Panc1 (cell line): ENCODE measurements at regions of chr14 and their contacts with region 1.

Region 1: GRCh38 chr14:23903442-23903841 is 50.1 kb upstream of the DHRS4 start:
- DNase-seq: no peak
- ATAC-seq: no peak
- H3K4me3 ChIP-seq: no peak overlapping the region
- H3K27ac ChIP-seq: no peak overlapping the region
- H3K4me1 ChIP-seq: no peaks in the 10 kb centered on the region
- H3K27me3 ChIP-seq: no peaks in the 10 kb centered on the region
- CTCF ChIP-seq: no peak

Region 2: DNA sequence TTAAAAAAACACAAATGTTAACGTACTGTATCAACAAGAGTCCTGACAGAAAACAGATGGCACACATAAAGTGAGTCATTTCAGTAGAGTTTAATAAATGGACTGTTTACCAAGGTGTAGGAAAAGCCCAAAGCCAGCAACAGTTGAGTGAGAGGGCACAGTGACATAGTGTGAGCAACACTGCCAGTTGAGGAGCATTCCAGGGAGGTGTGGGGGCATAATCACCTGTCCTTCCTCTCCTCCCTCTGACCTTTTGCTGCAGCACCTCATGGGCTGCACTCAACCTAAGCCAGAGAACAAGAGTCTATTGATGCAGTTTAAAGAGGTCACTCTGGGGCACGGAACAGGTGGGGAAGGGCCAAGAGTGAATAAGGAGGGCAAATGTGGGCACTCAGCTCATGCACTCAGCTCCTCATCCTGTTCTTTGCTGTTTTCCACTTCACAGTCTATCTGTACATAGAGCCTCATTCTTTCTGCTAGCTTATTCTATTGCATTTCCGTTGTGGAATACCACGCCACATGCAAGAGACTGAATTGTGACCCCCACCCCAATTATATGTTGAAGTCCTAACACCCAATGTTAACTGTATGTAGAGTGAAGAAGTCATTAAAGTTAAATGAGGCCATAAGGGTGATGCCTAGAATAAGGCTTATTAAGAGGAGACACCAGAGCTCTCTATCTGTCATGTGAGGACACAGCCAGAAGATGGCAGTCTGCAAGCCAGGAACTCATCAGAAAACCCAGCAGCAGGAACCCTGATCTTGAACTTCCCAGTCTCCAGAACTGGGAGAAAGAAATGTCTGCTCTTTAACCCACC is 237.9 kb before region 1 on chr14:
- CTCF ChIA-PET with region 1: no interaction called
- POLR2A ChIA-PET with region 1: no interaction called
- in situ Hi-C with region 1: no loop called
- intact Hi-C with region 1: loop called (anchors 10 kb)
- DNase-seq: peak; percentile 25
- ATAC-seq: peak; percentile 87; the same call in 1 of the 2 replicates
- H3K4me3 ChIP-seq: no peak overlapping the region
- H3K27ac ChIP-seq: no peak overlapping the region
- H3K4me1 ChIP-seq: no peaks in the 10 kb centered on the region
- H3K27me3 ChIP-seq: no peaks in the 10 kb centered on the region
- CTCF ChIP-seq: peak; percentile 77

Region 3: DNA sequence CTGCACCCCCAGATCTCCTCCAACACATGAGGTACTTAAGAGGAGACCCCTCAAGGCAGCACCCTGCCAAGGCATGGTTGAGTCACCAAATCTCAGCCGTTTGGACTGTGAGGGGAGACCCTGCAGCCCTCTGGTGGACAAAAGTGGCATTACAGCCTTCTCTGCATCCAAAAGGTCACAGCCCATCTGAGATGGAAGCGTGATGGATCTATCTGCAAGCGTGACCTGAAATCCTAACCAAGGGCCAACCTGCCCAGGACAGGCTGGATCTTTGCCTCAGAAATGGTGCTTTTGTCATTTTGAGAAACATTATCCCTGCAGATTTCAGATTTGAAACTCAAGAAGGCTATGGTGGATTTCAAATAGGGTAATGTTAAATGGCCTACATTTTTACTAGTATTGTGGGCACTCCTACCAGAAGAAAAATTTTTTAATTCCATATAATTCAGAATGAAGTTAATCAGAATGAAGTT is 26.4 kb after region 1 on chr14:
- CTCF ChIA-PET with region 1: no interaction called
- POLR2A ChIA-PET with region 1: no interaction called
- in situ Hi-C with region 1: no loop called
- intact Hi-C with region 1: no loop called
- DNase-seq: peak; percentile 61
- ATAC-seq: peak; percentile 88
- H3K4me3 ChIP-seq: no peak overlapping the region
- H3K27ac ChIP-seq: no peak overlapping the region
- H3K4me1 ChIP-seq: no peaks in the 10 kb centered on the region
- H3K27me3 ChIP-seq: no peaks in the 10 kb centered on the region
- CTCF ChIP-seq: peak; percentile 93